Activated CD4-positive, alpha-beta T cell treated with anti-CD3 and anti-CD28 coated beads for 36 hours (primary cell): ENCODE measurements at regions of chr2 and their contacts with region 1.

Region 1: GRCh38 chr2:176096986-176097819 is 2.4 kb upstream of the HOXD12 start:
- DNase-seq: peak; percentile 78
- ATAC-seq: peak; percentile 86
- H3K4me3 Mint-ChIP-seq: peak overlapping the region; percentile 50
- H3K27ac Mint-ChIP-seq: no peak overlapping the region
- H3K4me1 Mint-ChIP-seq: peaks cover 27% of the 10 kb centered on the region
- H3K27me3 Mint-ChIP-seq: peaks cover 77% of the 10 kb centered on the region

Region 2: DNA sequence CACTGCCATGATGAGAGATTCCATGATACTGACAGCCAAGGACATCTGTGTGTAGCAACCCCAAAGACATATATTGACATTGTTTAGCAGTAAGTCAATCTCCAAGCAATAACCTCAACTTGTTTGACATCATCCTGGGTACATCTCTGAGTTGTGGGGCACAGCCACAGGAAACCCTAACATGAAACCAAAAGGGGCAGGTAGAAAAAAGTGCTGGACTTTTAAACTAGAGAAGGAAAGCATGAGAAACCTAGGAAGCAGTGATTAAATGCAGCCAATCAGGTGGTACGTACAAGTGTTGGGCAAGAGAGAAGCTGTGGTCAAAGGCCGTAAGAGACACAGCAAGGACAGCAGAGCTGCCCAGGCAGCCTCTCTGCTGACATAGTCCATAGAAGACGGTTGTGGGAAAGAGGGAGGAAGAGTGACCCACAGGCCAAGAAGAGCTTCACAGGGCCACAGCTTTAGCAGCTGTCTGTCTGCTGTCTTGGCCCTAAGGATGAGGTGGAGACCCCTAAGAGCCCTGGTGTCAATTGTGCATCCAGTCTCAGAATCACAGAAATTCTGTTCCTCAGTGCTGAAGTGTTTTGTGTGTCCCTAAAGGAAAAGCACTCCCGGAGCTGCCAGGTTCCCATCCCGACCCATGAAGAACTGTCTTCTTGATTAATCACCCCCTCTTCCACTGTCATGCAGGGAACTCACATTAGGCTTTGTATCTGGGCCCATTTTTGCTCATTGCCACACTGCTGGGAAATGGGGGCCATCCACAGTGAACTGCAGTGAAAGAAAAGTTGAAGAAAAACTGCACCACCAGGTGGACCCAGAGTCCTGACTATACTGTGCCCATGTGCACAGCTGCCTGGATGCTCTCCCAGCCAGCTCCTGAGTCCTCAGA is 1066.6 kb before region 1 on chr2:
- CTCF ChIA-PET with region 1: no interaction called
- POLR2A ChIA-PET with region 1: no interaction called
- intact Hi-C with region 1: loop called in 1 of 2 experiments (anchors 10 kb)
- DNase-seq: peak; percentile 50
- ATAC-seq: no peak
- H3K4me3 Mint-ChIP-seq: no peak overlapping the region
- H3K27ac Mint-ChIP-seq: no peak overlapping the region
- H3K4me1 Mint-ChIP-seq: no peaks in the 10 kb centered on the region
- H3K27me3 Mint-ChIP-seq: no peaks in the 10 kb centered on the region

Region 3: DNA sequence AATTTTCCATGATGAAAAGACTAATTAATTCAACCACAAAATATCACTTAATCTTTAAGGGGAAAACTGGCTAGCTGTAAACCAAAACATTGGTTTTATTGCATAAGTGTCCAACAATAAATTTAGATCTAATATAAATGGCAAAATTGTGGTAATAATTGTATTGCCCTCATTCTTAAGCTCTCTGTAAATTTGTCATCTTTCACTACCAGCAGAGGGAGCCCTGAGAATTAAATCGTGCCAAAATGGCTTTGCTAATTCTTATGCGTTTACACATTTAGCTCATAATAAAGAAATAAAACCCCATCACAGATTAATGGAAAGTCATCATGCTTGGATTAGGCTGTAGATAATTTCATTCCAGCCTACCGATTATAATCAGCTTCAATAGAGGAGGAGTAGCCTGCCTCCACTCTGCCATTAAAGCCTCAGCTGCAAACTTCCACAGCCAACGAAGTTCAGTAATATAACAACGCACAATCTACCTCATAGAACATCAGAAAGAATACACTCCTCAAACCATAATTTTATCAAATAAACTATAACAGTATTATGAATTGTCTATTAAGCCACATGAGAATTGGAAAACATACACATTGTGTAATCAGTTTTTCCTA is 845.7 kb before region 1 on chr2:
- CTCF ChIA-PET with region 1: interaction called, 6 read pairs
- POLR2A ChIA-PET with region 1: no interaction called
- intact Hi-C with region 1: loop called (anchors 2 kb)
- DNase-seq: no peak
- ATAC-seq: no peak
- H3K4me3 Mint-ChIP-seq: no peak overlapping the region
- H3K27ac Mint-ChIP-seq: no peak overlapping the region
- H3K4me1 Mint-ChIP-seq: no peaks in the 10 kb centered on the region
- H3K27me3 Mint-ChIP-seq: peaks cover 22% of the 10 kb centered on the region

Region 4: DNA sequence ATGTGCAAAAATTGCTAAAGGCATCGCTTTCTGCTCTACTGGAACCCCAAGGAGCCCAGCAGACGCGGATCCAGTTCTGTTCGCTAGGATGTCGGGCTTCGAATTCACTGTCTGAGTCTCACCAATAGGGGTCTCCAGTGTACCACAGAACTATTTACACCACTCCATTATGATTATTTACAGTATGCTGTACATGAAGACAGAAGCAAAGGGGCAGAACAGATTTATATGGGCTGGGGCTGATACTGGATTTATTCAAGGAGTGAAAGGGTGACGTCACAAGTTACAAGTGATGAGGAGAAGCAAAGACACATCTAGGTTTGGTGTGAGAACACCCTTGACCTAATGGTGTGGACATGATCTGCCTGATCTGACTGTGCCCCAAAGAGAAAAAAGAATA is 730.4 kb before region 1 on chr2:
- CTCF ChIA-PET with region 1: interaction called, 17 read pairs
- POLR2A ChIA-PET with region 1: no interaction called
- intact Hi-C with region 1: loop called (anchors 1 to 2 kb)
- DNase-seq: peak; percentile 35
- ATAC-seq: peak; percentile 47
- H3K4me3 Mint-ChIP-seq: no peak overlapping the region
- H3K27ac Mint-ChIP-seq: no peak overlapping the region
- H3K4me1 Mint-ChIP-seq: no peaks in the 10 kb centered on the region
- H3K27me3 Mint-ChIP-seq: peaks cover 15% of the 10 kb centered on the region

Region 5: DNA sequence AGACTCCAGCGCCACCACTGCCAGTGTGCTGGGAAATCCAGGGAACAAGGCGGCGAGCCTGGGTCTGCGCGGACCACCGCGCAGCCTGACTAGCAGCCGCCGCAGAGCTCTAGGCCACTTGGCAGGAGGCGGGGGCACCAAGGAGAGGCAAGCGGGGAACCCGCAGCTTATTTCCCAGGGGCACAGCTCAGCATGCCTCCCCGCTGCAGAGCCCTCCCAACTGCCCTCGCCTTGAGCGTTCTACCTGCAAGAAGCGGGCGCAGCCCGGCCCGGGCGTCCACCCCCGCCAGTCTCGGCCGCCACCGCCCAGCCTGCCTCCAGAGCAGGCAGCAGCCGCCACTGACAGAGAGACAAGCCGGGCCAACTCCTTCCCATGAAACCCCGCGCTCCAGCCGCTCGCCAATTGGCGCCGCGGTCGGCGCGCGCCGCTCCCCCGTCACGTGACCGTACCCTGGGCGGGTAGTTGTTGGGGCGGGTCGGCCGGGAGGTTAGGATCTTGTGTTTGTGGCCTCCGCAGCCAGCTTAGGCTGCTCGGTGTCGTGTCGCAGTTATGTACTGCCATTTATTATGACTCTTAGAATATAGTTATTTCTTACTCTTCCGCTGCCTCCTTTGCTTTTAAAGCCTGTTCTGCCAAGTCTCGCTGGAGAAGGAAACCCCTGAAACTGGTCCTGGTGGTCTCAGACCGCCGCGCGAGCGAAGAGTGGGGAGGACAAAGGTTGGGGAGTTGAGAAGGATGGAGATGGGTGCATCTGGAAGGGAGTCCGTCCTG is 95.1 kb before region 1 on chr2 and contains the start of gene LNPK:
- CTCF ChIA-PET with region 1: interaction called, 3 read pairs
- POLR2A ChIA-PET with region 1: no interaction called
- intact Hi-C with region 1: loop called in 1 of 2 experiments (anchors 5 kb)
- DNase-seq: peak; percentile 95
- ATAC-seq: peak; percentile 93
- H3K4me3 Mint-ChIP-seq: peak within 1 kb of the TSS; percentile 99
- H3K27ac Mint-ChIP-seq: peak within 1 kb of the TSS; percentile 95
- H3K4me1 Mint-ChIP-seq: peaks cover 19% of the 10 kb centered on the region
- H3K27me3 Mint-ChIP-seq: no peaks in the 10 kb centered on the region
- total RNA-seq, gene LNPK: 27.3 to 36.0 TPM

Region 6: GRCh38 chr2:176110975-176111663 is 13.9 kb after region 1 on chr2:
- CTCF ChIA-PET with region 1: interaction called, 19 read pairs
- POLR2A ChIA-PET with region 1: no interaction called
- intact Hi-C with region 1: no loop called
- DNase-seq: peak; percentile 60
- ATAC-seq: no peak
- H3K4me3 Mint-ChIP-seq: no peak overlapping the region
- H3K27ac Mint-ChIP-seq: no peak overlapping the region
- H3K4me1 Mint-ChIP-seq: peaks cover 13% of the 10 kb centered on the region
- H3K27me3 Mint-ChIP-seq: peaks cover 70% of the 10 kb centered on the region